Dendritic cell treated with granulocyte-macrophage colony-stimulating factor and Interleukin-4, amounts not matched to agents 40 ng/mL and 50 ng/mL, for 4 days (primary cell): ENCODE measurements at regions of chr1 and their contacts with region 1.

Region 1: DNA sequence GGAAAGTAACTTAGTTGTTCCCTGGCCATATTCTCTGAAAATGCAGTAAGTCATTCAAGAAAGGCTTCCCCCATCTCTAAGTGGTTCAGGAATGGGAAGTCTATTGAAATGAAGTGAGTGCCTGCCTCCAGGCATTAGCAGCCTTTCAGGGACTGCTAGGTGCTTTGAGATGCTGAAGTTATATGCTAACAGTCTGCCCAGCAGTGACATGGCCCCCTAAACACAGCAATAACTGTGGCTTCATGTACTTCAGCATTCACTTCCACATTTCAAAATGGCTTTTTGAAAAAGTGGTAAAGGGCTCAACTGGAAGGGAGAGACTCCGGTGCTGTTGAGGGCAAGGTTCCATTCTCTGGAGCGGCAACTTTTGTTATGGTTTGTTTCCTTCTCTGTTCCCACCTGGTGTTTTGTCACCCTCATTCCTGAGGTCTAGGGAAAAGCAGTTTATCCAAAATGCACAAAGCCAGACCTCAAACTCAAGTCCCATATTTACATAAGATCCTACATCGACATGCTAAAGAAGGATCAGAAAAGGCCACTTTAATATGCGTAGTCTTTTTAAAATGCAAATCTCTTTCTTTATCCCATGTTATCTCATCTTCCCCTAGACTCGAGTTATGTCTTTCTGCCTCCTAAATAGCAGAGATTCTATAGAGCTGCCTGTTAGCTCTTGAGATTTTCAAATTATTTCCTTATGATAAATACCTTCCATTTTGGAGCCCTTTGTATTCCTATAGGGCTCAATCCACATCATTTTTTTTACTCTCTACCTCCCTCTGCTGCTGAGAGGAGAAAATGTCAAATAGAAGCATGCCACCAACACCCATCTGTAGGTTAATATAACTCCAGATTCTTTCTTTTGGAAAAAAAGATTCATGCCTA is 34.2 kb upstream of the LRRC8C start:
- H3K4me3 Mint-ChIP-seq: no peak overlapping the region
- H3K27ac Mint-ChIP-seq: no peak overlapping the region
- H3K4me1 Mint-ChIP-seq: peaks cover 26% of the 10 kb centered on the region
- H3K27me3 Mint-ChIP-seq: no peaks in the 10 kb centered on the region

Region 2: DNA sequence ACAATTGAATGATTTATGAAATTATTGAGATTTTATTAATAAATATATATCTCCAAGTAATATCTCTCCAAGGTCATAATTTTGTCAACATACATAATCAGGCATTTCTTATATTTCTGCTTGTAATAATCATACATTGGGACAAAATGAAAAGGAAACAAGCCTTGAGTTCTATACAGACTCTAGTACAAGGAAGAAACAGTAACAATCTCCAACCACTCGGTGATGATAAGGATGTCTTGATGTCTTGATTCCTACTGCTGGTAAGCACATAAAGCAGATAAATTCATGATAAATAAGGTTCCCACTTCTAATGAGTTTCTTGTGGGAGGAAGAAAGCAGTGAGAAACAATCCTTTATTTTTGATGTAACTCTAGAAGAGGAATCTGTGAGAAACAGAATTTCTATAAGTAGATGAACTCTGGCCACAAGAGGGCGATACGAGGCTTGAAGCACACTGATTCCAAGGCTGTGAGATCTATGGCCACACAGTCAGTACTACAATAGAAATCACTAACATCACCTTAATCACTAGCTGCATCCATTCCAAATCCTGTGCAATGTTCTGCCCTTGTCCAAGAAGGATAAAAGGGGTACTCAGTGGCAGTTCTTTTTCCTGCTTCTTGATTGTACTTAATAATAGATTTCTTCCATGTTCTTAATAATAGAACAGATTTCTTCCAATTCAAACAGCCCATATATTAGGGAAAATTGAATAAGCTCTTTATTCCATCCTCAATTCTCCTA is 115.5 kb before region 1 on chr1:
- intact Hi-C with region 1: loop called (anchors 1 kb)
- H3K4me3 Mint-ChIP-seq: no peak overlapping the region
- H3K27ac Mint-ChIP-seq: no peak overlapping the region
- H3K4me1 Mint-ChIP-seq: peaks cover under 1% of the 10 kb centered on the region
- H3K27me3 Mint-ChIP-seq: no peaks in the 10 kb centered on the region

Region 3: GRCh38 chr1:89519779-89520358 is 78.8 kb before region 1 on chr1:
- intact Hi-C with region 1: loop called (anchors 1 kb)
- H3K4me3 Mint-ChIP-seq: no peak overlapping the region
- H3K27ac Mint-ChIP-seq: no peak overlapping the region
- H3K4me1 Mint-ChIP-seq: peaks cover 17% of the 10 kb centered on the region
- H3K27me3 Mint-ChIP-seq: peaks cover 3% of the 10 kb centered on the region

Region 4: GRCh38 chr1:89649783-89650182 is 51.1 kb after region 1 on chr1:
- intact Hi-C with region 1: no loop called
- H3K4me3 Mint-ChIP-seq: no peak overlapping the region
- H3K27ac Mint-ChIP-seq: no peak overlapping the region
- H3K4me1 Mint-ChIP-seq: peaks cover 52% of the 10 kb centered on the region
- H3K27me3 Mint-ChIP-seq: no peaks in the 10 kb centered on the region